ENCODE measurements at regions of chr6 and their contacts with region 1.

Region 1: GRCh38 chr6:145814501-145815308 is at the start of gene FBXO30:
- DNase-seq: peak; percentile 83
- H3K4me3 Mint-ChIP-seq: peak within 1 kb of the TSS; percentile 87
- H3K27ac Mint-ChIP-seq: peak within 1 kb of the TSS; percentile 82
- H3K4me1 Mint-ChIP-seq: peaks cover 14% of the 10 kb centered on the region
- H3K27me3 Mint-ChIP-seq: no peaks in the 10 kb centered on the region
- CTCF ChIP-seq: no peak
- total RNA-seq, gene FBXO30: 3.6 TPM in 2 replicates

Region 2: GRCh38 chr6:145247679-145248419 is 566.9 kb before region 1 on chr6:
- CTCF ChIA-PET with region 1: no interaction called
- intact Hi-C with region 1: no loop called
- DNase-seq: no peak
- H3K4me3 Mint-ChIP-seq: no peak overlapping the region
- H3K27ac Mint-ChIP-seq: no peak overlapping the region
- H3K4me1 Mint-ChIP-seq: no peaks in the 10 kb centered on the region
- H3K27me3 Mint-ChIP-seq: no peaks in the 10 kb centered on the region
- CTCF ChIP-seq: no peak

Region 3: GRCh38 chr6:145453376-145453775 is 361.3 kb before region 1 on chr6:
- CTCF ChIA-PET with region 1: no interaction called
- intact Hi-C with region 1: no loop called
- DNase-seq: no peak
- H3K4me3 Mint-ChIP-seq: no peak overlapping the region
- H3K27ac Mint-ChIP-seq: no peak overlapping the region
- H3K4me1 Mint-ChIP-seq: no peaks in the 10 kb centered on the region
- H3K27me3 Mint-ChIP-seq: no peaks in the 10 kb centered on the region
- CTCF ChIP-seq: no peak

Region 4: GRCh38 chr6:145734486-145735355 is 80.0 kb before region 1 on chr6:
- CTCF ChIA-PET with region 1: no interaction called
- intact Hi-C with region 1: loop called (anchors 1 kb)
- DNase-seq: peak; percentile 84
- H3K4me3 Mint-ChIP-seq: peak overlapping the region; percentile 90
- H3K27ac Mint-ChIP-seq: peak overlapping the region; percentile 94
- H3K4me1 Mint-ChIP-seq: no peaks in the 10 kb centered on the region
- H3K27me3 Mint-ChIP-seq: no peaks in the 10 kb centered on the region
- CTCF ChIP-seq: no peak

Region 5: DNA sequence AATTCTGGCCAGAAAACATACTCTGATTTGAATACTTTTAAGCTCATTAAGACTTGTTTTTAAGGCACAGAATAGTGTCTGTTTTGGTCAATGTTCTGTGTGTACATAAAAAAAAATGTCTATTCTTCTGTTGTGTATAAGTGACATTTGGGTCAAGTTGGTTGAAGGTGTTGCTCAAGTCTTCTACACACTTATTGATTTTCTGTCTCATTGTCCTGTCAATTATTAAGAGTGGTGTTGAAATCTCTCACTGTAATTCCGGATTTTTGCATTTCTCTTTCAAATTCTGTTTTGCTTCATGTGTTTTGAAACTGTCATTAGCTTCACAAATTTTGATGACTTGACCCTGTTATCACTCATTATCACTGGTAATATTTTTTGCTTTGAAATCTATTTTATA is 41.9 kb before region 1 on chr6:
- CTCF ChIA-PET with region 1: no interaction called
- intact Hi-C with region 1: loop called (anchors 5 kb)
- DNase-seq: no peak
- H3K4me3 Mint-ChIP-seq: no peak overlapping the region
- H3K27ac Mint-ChIP-seq: no peak overlapping the region
- H3K4me1 Mint-ChIP-seq: peaks cover 19% of the 10 kb centered on the region
- H3K27me3 Mint-ChIP-seq: no peaks in the 10 kb centered on the region
- CTCF ChIP-seq: no peak

Measured in Calu3 (cell line).